ENCODE measurements at regions of chr12 and their contacts with region 1.

Region 1: GRCh38 chr12:77010691-77011548 is 54.4 kb downstream of the E2F7 start:
- DNase-seq: peak; percentile 85
- H3K4me3 Mint-ChIP-seq: no peak overlapping the region
- H3K27ac Mint-ChIP-seq: no peak overlapping the region
- H3K4me1 Mint-ChIP-seq: no peaks in the 10 kb centered on the region
- H3K27me3 Mint-ChIP-seq: no peaks in the 10 kb centered on the region
- CTCF ChIP-seq: peak; percentile 78

Region 2: DNA sequence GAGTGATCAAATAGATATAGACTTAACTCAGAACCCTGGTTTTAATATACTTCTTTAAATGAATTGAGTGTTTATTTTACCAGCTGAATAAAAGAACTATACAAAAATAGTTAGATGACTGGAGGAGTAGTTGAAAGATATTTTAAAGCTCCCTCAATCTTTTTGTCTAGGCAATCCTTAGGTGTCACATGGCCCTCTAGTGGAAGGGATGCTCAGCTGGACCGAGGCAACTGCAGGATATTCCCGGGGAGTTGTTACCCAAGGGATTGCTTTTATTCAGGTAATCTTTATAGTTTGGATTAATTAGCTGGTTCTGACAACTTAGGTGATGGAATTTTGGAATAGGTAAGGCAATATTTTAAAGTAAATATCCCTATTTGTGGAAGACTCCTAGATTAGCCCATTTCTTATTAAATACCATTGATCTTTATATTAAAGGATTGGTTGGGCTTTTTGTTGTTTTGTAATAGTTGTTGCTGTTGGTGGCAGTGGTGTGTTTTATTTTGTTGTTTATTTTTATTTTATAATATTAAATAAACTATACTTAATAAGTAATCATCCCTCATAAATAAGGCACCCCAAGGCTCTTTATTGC is 189.9 kb before region 1 on chr12:
- CTCF ChIA-PET with region 1: interaction called, 14 read pairs
- intact Hi-C with region 1: no loop called
- DNase-seq: peak; percentile 50
- H3K4me3 Mint-ChIP-seq: no peak overlapping the region
- H3K27ac Mint-ChIP-seq: no peak overlapping the region
- H3K4me1 Mint-ChIP-seq: no peaks in the 10 kb centered on the region
- H3K27me3 Mint-ChIP-seq: no peaks in the 10 kb centered on the region
- CTCF ChIP-seq: peak; percentile 50

Region 3: GRCh38 chr12:76878899-76879709 is 131.8 kb before region 1 on chr12 and contains the start of gene CSRP2:
- CTCF ChIA-PET with region 1: interaction called, 5 read pairs
- intact Hi-C with region 1: loop called (anchors 5 kb)
- DNase-seq: peak; percentile 92
- H3K4me3 Mint-ChIP-seq: peak within 1 kb of the TSS; percentile 77
- H3K27ac Mint-ChIP-seq: peak within 1 kb of the TSS; percentile 77
- H3K4me1 Mint-ChIP-seq: peaks cover 16% of the 10 kb centered on the region
- H3K27me3 Mint-ChIP-seq: no peaks in the 10 kb centered on the region
- CTCF ChIP-seq: no peak
- total RNA-seq, gene CSRP2: 9.1 and 11.7 TPM in 2 replicates

Measured in Calu3 (cell line).